CD14-positive monocyte (primary cell): ENCODE measurements at regions of chr1 and their contacts with region 1.

Region 1: DNA sequence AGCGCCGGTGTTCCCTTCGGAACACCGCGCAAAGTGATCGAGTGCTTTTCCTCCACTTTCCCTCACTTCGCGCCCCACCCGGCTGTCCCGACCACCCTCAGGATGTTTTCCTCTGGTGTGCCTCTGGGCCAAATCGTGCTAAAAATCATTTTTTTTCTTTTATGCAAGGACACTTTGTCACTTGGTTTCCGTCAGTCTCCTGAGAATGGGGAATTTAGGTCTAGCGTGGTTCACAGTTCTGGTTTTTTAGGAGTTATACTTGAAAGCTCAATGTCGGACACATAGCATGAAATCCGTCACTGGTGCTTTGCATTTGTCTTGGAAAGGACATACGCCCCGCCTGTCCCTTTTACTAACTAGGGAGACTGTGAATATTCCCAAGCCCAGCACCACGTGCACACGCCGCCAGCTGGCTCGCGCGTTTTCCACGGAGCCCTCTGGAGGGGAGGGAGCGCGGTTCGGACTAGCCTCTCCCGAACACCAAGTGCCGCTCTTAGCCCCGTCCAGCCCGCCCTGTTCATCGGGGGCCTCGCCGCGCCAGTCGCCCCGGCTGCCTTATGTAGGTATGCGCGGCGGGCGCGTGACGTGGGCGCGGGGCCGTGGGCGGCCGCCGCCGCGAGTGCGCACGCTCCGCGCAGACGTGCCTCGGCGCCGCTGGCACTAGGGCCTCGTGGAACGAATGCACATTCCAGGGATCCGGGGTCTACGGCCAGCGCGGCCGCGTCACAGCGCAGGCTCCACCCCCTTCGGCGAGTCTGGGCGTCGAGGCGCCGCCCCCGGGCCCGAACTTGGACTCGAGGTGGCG is 572 bp upstream of the IRF2BP2 start:
- DNase-seq: peak; percentile 89 to 96 (median 94)
- H3K4me3 ChIP-seq: peak overlapping the region; percentile 67 to 88 (median 77)
- H3K4me3 Mint-ChIP-seq: peak overlapping the region; percentile 90 to 92
- H3K27ac ChIP-seq: peak overlapping the region; percentile 96 to 98
- H3K27ac Mint-ChIP-seq: peak overlapping the region; percentile 98 to 100 (median 99)
- H3K4me1 ChIP-seq: peaks cover 48 to 54% of the 10 kb centered on the region in 2 donors
- H3K4me1 Mint-ChIP-seq: peaks cover 31% of the 10 kb centered on the region
- H3K27me3 ChIP-seq: no peaks in the 10 kb centered on the region
- H3K27me3 Mint-ChIP-seq: no peaks in the 10 kb centered on the region
- CTCF ChIP-seq: no peak

Region 2: GRCh38 chr1:234722904-234723720 is 112.6 kb after region 1 on chr1:
- intact Hi-C with region 1: loop called in 1 of 2 experiments (anchors 5 kb)
- DNase-seq: peak; percentile 87 to 95 (median 94)
- H3K4me3 ChIP-seq: peak overlapping the region in 1 of 3 experiments; percentile 61
- H3K4me3 Mint-ChIP-seq: peak overlapping the region; percentile 65 to 75
- H3K27ac ChIP-seq: peak overlapping the region; percentile 89 to 95
- H3K27ac Mint-ChIP-seq: peak overlapping the region; percentile 93 to 98 (median 97)
- H3K4me1 ChIP-seq: peaks cover 92 to 93% of the 10 kb centered on the region in 2 donors
- H3K4me1 Mint-ChIP-seq: peaks cover 96% of the 10 kb centered on the region
- H3K27me3 ChIP-seq: no peaks in the 10 kb centered on the region
- H3K27me3 Mint-ChIP-seq: peaks cover 0 to 4% (median 2%) of the 10 kb centered on the region in 3 donors
- CTCF ChIP-seq: no peak

Region 3: DNA sequence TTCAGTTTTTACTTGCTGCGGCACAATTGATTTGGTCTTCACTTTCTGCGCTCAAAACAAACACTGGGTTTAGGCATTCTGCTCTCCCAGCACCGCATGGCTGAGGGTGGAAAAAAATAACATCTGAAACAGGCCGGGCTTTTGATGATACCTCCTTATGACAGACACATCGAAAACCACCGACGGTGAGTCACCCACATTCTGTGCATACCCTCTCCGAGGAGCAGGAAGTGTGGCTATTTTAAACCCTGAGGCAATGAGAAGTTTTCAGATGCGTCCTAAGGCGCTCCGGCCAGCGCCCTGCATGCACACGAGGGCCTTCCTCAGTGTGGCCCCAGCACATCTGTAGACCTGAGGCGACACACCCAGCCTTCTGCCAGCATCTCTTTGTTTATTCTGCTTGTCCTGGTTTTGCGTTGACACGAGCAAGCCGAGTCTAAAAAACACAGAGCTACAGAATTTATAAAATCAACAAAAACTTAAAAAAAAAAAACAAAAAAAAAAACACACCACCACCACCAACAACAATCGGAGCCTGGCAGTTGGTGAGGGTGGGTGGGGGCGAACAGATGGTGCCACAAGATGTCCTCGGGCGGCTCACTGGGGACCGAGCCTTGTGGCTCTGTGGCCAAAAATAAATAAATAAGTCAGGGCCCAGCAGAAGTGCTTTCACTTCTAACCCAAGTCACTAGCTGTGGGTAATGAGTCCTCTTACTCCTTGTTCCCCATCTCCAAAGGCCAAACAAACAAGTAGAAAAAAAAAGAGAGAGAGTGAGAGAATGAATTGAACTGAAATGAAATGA is 162.0 kb after region 1 on chr1:
- intact Hi-C with region 1: loop called in 1 of 2 experiments (anchors 2 kb)
- DNase-seq: peak; percentile 98 to 100 (median 99)
- H3K4me3 ChIP-seq: peak overlapping the region in 1 of 3 experiments; percentile 17
- H3K4me3 Mint-ChIP-seq: peak overlapping the region; percentile 52 to 75
- H3K27ac ChIP-seq: peak overlapping the region; percentile 94 to 98
- H3K27ac Mint-ChIP-seq: peak overlapping the region in 4 of 7 donors; percentile 96 to 100 (median 99)
- H3K4me1 ChIP-seq: peaks cover 88 to 92% of the 10 kb centered on the region in 2 donors
- H3K4me1 Mint-ChIP-seq: peaks cover 51% of the 10 kb centered on the region
- H3K27me3 ChIP-seq: no peaks in the 10 kb centered on the region
- H3K27me3 Mint-ChIP-seq: no peaks in the 10 kb centered on the region
- CTCF ChIP-seq: no peak

Region 4: GRCh38 chr1:234851450-234852438 is 241.2 kb after region 1 on chr1:
- intact Hi-C with region 1: loop called in 1 of 2 experiments (anchors 5 kb)
- DNase-seq: peak; percentile 86 to 96 (median 96)
- H3K4me3 ChIP-seq: peak overlapping the region in 1 of 3 experiments; percentile 9
- H3K4me3 Mint-ChIP-seq: peak overlapping the region in 1 of 2 donors; percentile 15
- H3K27ac ChIP-seq: peak overlapping the region; percentile 93 to 100
- H3K27ac Mint-ChIP-seq: peak overlapping the region; percentile 95 to 100 (median 97)
- H3K4me1 ChIP-seq: peaks cover 79 to 84% of the 10 kb centered on the region in 2 donors
- H3K4me1 Mint-ChIP-seq: peaks cover 87% of the 10 kb centered on the region
- H3K27me3 ChIP-seq: no peaks in the 10 kb centered on the region
- H3K27me3 Mint-ChIP-seq: peaks cover 0 to 2% (median 1%) of the 10 kb centered on the region in 3 donors
- CTCF ChIP-seq: no peak

Region 5: DNA sequence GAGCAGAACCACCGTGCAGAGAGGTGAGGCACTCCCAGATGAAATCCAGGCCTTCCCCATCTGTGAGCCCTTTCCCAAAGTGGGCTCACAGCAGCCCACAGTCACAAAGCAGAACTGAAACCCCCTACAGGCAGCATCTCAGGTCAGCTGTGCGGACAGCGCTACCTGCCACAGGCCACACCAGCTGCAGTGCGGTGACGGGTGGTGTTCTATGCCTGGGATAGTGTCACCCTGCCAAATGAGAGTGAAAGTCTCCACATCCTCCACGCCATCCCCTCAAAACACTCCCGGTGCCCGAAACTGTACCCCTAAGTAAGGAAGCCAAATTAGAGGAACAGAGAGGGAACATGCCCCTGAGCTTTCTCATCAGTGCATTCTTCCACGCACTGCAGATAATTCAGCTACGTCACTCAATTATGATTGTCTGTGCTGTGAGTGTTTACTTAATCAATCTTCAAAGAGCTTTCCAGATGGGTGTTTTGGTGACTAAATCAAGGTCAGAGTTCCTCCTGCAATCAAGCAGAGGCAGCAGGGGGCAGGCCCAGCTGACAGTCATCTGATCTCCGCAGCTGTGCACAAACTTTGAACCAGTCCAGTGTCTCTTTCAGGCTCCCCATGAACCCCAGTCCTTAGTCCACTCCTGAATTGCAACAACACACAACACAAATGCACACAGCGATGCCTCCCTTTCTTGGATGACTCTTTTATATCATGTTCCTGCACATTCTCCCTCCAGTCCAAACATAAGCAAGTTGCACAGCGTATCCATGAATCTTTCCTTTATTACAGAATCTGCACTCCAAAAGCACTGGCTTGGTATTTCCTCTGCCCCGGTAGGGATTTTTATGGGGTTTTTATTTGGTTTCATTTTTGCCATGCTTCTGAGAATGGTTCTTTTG is 368.1 kb after region 1 on chr1:
- intact Hi-C with region 1: loop called (anchors 5 kb)
- DNase-seq: peak; percentile 91 to 96 (median 93)
- H3K4me3 ChIP-seq: peak overlapping the region in 1 of 3 experiments; percentile 67
- H3K4me3 Mint-ChIP-seq: peak overlapping the region; percentile 86 to 96
- H3K27ac ChIP-seq: peak overlapping the region; percentile 99 to 100
- H3K27ac Mint-ChIP-seq: peak overlapping the region; percentile 100
- H3K4me1 ChIP-seq: peaks cover 100% of the 10 kb centered on the region in 2 donors
- H3K4me1 Mint-ChIP-seq: peaks cover 91% of the 10 kb centered on the region
- H3K27me3 ChIP-seq: no peaks in the 10 kb centered on the region
- H3K27me3 Mint-ChIP-seq: no peaks in the 10 kb centered on the region
- CTCF ChIP-seq: peak; percentile 28